A673 (cell line): ENCODE measurements at regions of chr5 and their contacts with region 1.

Region 1: DNA sequence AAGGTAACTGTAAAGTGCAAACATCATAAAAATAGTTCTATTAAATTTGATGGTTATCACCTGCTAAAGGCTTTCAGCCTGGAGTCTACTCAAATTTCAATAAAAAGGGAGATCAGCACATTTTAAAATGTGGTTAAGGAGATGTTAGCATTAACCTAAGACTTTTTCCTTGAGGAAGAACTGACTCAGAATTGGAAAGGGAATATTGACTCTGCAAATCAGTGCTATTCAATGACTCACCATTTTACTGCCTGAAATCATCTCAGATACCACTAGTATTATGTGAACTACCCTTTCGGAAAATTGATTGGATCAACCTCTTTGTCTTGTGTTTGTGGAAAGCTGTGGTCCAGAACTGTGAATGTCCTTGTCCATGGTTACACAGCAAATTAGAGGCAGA is 113.3 kb downstream of the ADRB2 start:
- DNase-seq: no peak
- H3K4me3 ChIP-seq: no peak overlapping the region
- H3K27ac ChIP-seq: no peak overlapping the region
- H3K4me1 ChIP-seq: no peaks in the 10 kb centered on the region
- H3K27me3 ChIP-seq: no peaks in the 10 kb centered on the region
- CTCF ChIP-seq: no peak

Region 2: GRCh38 chr5:149028984-149029383 is 89.3 kb after region 1 on chr5:
- CTCF ChIA-PET with region 1: no interaction called
- POLR2A ChIA-PET with region 1: interaction called, 11 read pairs
- intact Hi-C with region 1: no loop called
- DNase-seq: no peak
- H3K4me3 ChIP-seq: no peak overlapping the region
- H3K27ac ChIP-seq: no peak overlapping the region
- H3K4me1 ChIP-seq: no peaks in the 10 kb centered on the region
- H3K27me3 ChIP-seq: no peaks in the 10 kb centered on the region
- CTCF ChIP-seq: no peak